GM10248 (cell line): ENCODE measurements at regions of chr11 and their contacts with region 1.

Region 1: DNA sequence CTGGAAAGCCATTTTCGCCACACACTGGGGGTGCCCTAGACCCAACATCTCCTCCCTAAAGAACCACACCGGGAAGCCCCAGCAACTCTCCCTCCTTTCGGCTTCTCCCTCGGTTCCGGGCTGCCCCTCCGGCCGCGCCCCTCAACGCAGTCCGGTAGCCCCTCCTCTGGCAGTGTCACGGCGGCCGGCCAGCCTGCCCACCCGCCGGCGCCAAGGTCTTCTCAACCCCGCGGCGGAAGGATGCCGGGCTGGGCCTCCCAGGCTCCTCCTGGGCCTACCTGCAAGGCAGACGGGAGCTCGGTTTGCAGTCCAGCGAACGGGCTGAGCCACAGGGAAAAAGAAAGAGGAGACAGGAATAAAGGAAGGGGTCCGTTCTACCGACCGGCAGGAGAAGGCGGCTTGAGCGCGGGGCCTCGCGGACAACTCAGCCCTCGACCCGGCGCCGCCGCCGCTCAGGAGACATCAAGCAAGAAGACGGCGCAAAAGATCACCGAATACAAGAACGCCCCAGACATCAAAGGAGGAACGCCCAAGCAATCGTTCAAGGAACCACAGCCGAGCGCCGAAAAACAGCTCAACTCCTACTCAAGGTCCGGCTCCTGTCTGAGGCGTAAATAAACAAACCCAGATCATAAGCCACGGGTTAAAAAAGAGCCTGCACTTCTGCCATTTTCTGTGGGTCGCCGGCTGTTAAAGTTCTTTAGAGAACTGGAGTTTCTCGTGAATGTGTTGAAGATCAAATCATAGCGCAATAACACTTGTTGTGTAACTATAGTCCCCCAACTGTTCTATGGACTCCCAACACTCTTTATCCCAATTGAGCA is at the start of gene AMBRA1:
- DNase-seq: peak; percentile 87
- CTCF ChIP-seq: no peak

Region 2: GRCh38 chr11:46616998-46617675 is 23.4 kb after region 1 on chr11 and contains the starts of genes ATG13 and HARBI1:
- CTCF ChIA-PET with region 1: interaction called, 11 read pairs
- POLR2A ChIA-PET with region 1: interaction called, 4 read pairs
- DNase-seq: peak; percentile 93
- CTCF ChIP-seq: no peak

Region 3: GRCh38 chr11:46896719-46897406 is 303.1 kb after region 1 on chr11:
- CTCF ChIA-PET with region 1: no interaction called
- POLR2A ChIA-PET with region 1: no interaction called
- DNase-seq: peak; percentile 44
- CTCF ChIP-seq: peak; percentile 9